Dendritic cell treated with granulocyte-macrophage colony-stimulating factor and Interleukin-4, amounts not matched to agents 40 ng/mL and 50 ng/mL, for 4 days (primary cell): ENCODE measurements at regions of chr13 and their contacts with region 1.

Region 1: DNA sequence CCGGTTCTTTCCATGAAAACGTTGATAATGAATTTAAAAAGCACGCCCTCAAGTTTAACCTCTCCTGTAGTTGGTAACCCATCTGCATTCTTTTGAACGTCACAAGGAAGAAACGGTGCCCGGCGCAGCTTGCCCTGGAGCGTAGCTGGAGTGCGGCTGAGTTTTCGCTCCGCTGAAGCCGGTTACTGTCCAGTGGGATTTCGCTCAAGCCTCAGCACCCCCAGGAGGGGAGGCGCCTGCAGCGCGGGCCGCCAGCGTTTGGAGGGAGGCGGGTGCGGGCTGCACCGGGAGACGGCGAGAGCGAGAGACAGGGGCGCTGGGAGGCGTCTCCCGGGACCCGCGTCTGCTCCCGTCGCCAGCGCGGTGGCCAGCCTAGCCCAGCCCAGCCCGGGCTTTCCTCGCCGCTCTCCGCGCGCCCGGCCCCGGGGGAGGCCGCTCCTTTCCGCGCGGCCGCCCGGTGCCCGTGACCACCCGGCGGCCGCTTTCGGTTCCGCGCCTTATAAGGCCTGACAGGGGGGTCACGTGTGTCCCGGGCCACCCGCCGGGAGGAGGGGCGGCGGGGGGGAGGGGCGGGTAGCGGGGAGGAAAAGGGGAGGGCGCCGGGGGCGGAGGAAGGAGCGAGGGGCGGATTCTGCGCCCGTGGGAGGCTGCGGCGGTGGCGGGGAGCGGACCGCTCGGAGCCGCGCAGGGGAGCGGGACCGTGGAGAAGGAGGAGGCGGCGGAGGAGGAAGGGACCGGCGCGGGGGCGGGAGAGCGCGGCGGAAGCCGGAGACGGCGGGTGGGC is 8.3 kb upstream of the DGKH start:
- H3K4me3 Mint-ChIP-seq: peak overlapping the region; percentile 92
- H3K27ac Mint-ChIP-seq: peak overlapping the region; percentile 76
- H3K4me1 Mint-ChIP-seq: peaks cover 23% of the 10 kb centered on the region
- H3K27me3 Mint-ChIP-seq: peaks cover 44% of the 10 kb centered on the region

Region 2: GRCh38 chr13:42239644-42240043 is 199.5 kb after region 1 on chr13:
- intact Hi-C with region 1: no loop called
- H3K4me3 Mint-ChIP-seq: no peak overlapping the region
- H3K27ac Mint-ChIP-seq: no peak overlapping the region
- H3K4me1 Mint-ChIP-seq: no peaks in the 10 kb centered on the region
- H3K27me3 Mint-ChIP-seq: no peaks in the 10 kb centered on the region

Region 3: GRCh38 chr13:42271337-42272114 is 231.4 kb after region 1 on chr13:
- intact Hi-C with region 1: loop called (anchors 10 kb)
- H3K4me3 Mint-ChIP-seq: peak overlapping the region; percentile 93
- H3K27ac Mint-ChIP-seq: peak overlapping the region; percentile 95
- H3K4me1 Mint-ChIP-seq: peaks cover 48% of the 10 kb centered on the region
- H3K27me3 Mint-ChIP-seq: no peaks in the 10 kb centered on the region

Region 4: DNA sequence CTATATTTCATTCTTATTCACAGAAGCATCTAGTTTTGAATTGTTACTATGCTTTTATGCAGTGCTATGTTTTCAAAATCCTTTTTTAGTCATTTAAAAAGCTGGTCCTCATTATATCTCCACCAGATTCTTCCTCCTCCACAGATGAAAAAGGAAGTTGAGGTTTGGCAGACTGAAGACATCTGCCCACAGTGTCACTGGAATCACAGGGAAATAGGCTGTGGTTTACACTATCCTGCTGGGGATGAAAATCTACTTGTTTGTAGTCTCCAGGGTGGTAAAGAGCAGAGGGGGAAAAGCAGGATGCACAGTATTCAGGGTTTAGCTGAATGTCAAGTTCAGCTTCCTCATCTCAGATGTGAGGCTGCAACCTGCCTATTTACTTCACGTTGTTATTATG is 1334.5 kb after region 1 on chr13:
- intact Hi-C with region 1: no loop called
- H3K4me3 Mint-ChIP-seq: no peak overlapping the region
- H3K27ac Mint-ChIP-seq: no peak overlapping the region
- H3K4me1 Mint-ChIP-seq: peaks cover 61% of the 10 kb centered on the region
- H3K27me3 Mint-ChIP-seq: peaks cover 53% of the 10 kb centered on the region